Right ventricle myocardium inferior (tissue), 1 donor: ENCODE measurements at regions of chr15 and their contacts with region 1.

Region 1: DNA sequence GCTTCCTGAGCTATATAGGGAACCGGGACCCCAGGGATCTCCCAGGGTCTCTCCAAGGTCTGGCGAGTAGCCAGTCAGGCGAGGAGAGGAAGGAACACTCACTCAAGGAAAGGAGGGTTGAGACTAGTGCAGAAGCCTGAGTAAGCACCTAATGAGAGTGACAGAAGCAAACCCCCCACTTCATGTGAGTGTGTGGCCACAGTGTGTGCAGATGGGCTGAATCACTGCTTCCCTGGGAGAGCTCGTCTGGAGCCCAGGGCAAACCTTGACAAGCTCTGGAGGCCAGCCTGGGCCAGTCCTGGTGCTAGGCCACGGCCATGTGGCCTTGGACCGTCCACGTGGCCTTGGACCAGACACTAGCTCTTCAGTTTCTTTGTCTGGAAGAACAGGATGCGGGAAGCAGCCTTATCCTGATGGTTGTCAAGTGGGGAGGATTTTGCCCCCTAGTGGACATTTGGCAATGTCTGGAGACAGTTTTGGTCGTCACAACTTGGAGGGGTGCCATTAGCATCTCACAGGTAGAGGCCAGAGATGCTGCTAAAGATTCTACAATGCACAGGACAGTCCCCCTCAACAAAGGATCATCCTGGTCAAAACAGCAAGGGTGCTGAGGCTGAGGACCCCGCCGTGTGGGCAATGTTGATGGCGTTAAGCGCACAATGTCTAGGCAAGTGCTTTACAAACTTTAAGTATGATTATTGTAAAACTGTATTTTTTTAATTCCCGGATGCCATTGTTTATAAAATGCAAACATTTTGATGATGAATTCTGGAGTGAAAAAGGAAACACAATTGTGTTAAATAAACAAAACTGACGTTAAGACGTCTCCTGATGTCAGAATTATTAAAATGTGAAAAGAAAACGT is 34.8 kb upstream of the CTSH start:
- DNase-seq: no peak
- ATAC-seq: peak; percentile 30

Region 2: DNA sequence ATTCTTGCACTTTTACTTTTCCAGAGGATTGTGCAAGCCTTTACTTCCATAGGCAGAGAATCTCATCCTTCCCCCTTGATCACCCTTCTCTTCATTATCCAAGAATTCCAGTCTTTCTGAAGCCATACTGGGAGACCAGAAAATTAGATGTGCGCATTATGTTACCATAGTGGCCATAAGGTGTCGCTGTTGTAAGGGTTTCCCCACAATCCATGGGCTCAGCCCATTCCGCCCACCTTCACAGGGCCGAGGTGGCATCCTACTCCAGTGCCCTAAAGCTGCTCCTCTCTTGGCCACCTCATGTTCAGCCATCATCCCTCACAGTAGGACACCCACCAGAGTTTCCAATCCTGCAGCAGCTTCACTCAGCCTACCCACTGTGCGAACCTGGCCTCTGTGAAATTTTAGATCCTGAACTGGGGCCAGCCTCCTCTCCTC is 69.9 kb before region 1 on chr15:
- intact Hi-C with region 1: loop called (anchors 2 kb)
- DNase-seq: no peak
- ATAC-seq: peak; percentile 35

Region 3: GRCh38 chr15:78922527-78923414 is 56.9 kb before region 1 on chr15:
- intact Hi-C with region 1: no loop called
- DNase-seq: no peak
- ATAC-seq: no peak

Region 4: GRCh38 chr15:78954889-78955288 is 24.8 kb before region 1 on chr15:
- intact Hi-C with region 1: loop called (anchors 2 kb)
- DNase-seq: no peak
- ATAC-seq: no peak

Region 5: GRCh38 chr15:79339564-79340314 is 360.1 kb after region 1 on chr15:
- intact Hi-C with region 1: no loop called
- DNase-seq: no peak
- ATAC-seq: no peak